Naive thymus-derived CD4-positive, alpha-beta T cell (primary cell): ENCODE measurements at regions of chr15 and their contacts with region 1.

Region 1: GRCh38 chr15:52179278-52180195 is 11.7 kb downstream of the GNB5 start:
- DNase-seq: peak; percentile 79 to 92 (median 91)
- ATAC-seq: peak; percentile 91
- H3K4me3 ChIP-seq: peak overlapping the region; percentile 98
- H3K4me3 Mint-ChIP-seq: peak overlapping the region; percentile 86 to 100 (median 94)
- H3K27ac ChIP-seq: peak overlapping the region; percentile 95
- H3K27ac Mint-ChIP-seq: peak overlapping the region; percentile 90 to 99 (median 98)
- H3K4me1 ChIP-seq: peaks cover 19 to 20% of the 10 kb centered on the region in 2 donors
- H3K4me1 Mint-ChIP-seq: peaks cover 14 to 50% (median 40%) of the 10 kb centered on the region in 7 donors
- H3K27me3 ChIP-seq: no peaks in the 10 kb centered on the region
- H3K27me3 Mint-ChIP-seq: no peaks in the 10 kb centered on the region

Region 2: DNA sequence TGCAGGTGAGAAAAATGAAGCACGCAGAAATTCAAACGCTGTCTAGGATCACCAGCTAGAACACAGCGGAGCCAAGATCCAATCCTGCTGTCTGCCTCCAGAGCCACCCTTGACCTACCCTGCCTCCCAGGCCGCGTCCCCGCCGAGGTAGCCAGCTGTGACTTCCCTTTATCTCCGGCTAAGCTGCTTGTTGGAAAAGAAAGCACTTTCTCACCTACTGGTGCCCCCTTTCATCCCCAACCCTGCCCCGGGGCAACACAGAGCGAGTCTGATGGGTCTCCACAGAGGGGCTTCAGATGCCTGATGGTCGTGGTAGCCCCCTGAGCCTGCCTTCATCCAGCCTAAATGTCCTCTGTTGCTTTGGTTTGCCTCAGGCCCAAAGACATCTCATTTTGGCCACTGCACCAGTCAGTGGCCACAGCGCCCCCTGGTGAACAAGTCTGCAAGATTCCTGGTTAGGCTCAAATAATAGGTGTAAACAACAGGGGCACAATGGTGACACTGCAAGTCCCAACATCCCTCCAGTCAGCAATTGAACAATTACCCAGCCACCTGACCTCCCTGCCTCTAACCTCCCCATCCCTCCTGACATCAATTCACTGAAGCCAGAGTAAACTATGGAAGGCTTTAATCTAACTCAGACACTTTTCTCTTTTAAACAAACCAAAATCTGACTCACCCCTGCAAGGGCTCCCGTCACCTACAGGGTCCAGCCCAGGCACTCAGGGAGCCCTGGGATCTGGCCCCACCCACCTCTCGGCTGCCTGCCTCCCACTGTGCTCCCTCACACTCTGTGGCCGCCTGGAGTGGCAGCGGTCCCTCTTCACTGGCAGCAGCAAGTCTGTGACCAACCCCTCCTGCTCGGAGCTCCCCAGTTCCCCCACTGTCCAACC is 39.7 kb before region 1 on chr15:
- CTCF ChIA-PET with region 1: no interaction called
- POLR2A ChIA-PET with region 1: interaction called, 11 read pairs
- intact Hi-C with region 1: no loop called
- DNase-seq: peak; percentile 17 to 70 (median 49)
- ATAC-seq: peak; percentile 71
- H3K4me3 ChIP-seq: no peak overlapping the region
- H3K4me3 Mint-ChIP-seq: no peak overlapping the region
- H3K27ac ChIP-seq: no peak overlapping the region
- H3K27ac Mint-ChIP-seq: peak overlapping the region in 3 of 9 donors; percentile 20 to 65 (median 63)
- H3K4me1 ChIP-seq: peaks cover 13 to 14% of the 10 kb centered on the region in 2 donors
- H3K4me1 Mint-ChIP-seq: peaks cover 8 to 29% (median 22%) of the 10 kb centered on the region in 7 donors
- H3K27me3 ChIP-seq: no peaks in the 10 kb centered on the region
- H3K27me3 Mint-ChIP-seq: no peaks in the 10 kb centered on the region

Region 3: DNA sequence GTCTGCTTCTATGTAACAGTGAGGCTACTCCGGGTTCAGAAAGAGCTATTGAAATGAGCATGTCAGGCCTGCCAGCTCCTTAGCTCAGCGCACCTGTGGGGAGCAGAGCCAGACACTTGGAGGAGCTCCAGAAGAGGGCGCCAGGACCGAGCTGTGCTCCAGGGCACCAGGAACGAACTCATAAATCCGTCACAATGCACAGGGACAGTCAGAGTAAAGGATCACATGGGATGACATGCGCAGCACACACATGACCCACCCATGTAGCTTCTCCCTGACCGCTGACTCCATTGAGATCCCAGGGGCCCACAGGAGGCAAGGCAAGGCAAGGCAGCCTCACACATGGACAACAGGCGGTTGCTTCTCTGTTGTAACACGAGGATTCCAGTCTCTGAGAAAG is 37.6 kb after region 1 on chr15:
- CTCF ChIA-PET with region 1: no interaction called
- POLR2A ChIA-PET with region 1: interaction called, 33 read pairs
- intact Hi-C with region 1: loop called in 1 of 2 experiments (anchors 1 kb)
- DNase-seq: no peak
- ATAC-seq: no peak
- H3K4me3 ChIP-seq: no peak overlapping the region
- H3K4me3 Mint-ChIP-seq: no peak overlapping the region
- H3K27ac ChIP-seq: no peak overlapping the region
- H3K27ac Mint-ChIP-seq: no peak overlapping the region
- H3K4me1 ChIP-seq: peaks cover 5 to 9% of the 10 kb centered on the region in 2 donors
- H3K4me1 Mint-ChIP-seq: peaks cover 9 to 28% (median 16%) of the 10 kb centered on the region in 7 donors
- H3K27me3 ChIP-seq: no peaks in the 10 kb centered on the region
- H3K27me3 Mint-ChIP-seq: no peaks in the 10 kb centered on the region

Region 4: DNA sequence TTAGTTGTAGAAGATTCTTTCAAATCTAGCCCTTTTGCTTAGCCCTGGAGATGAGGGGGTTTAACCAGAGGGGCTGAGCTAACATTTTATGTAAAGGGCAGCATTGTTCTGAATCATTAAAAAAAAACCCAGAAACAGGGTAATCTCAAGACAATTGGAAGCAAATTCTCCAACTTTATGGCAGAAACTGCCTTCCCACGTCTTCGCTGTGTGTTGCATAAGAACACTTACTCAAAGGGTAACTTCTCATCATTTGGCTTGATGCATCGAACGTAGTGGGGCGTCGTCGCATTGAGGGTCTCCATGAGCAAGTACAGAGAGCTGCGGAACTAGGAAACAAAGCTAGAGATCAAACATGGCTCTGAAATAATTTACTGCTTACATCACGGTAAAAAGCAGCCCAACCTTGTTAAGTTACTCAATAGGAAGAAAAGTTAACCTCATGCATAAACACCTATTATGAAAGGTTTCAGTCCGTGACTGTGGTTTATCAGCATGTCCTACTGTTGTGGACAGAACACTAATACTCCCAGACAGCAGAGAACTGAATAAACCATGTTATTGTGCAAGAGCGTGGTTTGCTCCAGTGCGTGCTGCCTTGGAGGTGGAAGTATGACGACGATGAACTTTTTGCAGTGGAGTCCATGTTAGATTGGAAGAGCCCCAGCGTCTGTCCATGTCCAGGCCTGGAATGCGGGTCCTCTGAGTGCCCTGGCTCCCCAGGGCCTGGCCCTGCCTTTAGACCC is 67.3 kb after region 1 on chr15:
- CTCF ChIA-PET with region 1: no interaction called
- POLR2A ChIA-PET with region 1: no interaction called
- intact Hi-C with region 1: no loop called
- DNase-seq: no peak
- ATAC-seq: peak; percentile 70
- H3K4me3 ChIP-seq: no peak overlapping the region
- H3K4me3 Mint-ChIP-seq: no peak overlapping the region
- H3K27ac ChIP-seq: no peak overlapping the region
- H3K27ac Mint-ChIP-seq: no peak overlapping the region
- H3K4me1 ChIP-seq: no peaks in the 10 kb centered on the region
- H3K4me1 Mint-ChIP-seq: peaks cover 0 to 13% (median 3%) of the 10 kb centered on the region in 7 donors
- H3K27me3 ChIP-seq: no peaks in the 10 kb centered on the region
- H3K27me3 Mint-ChIP-seq: peaks cover 0 to 8% (median 0%) of the 10 kb centered on the region in 5 donors